Right cardiac atrium (tissue), 5 donors: ENCODE measurements at regions of chr4 and their contacts with region 1.

Region 1: DNA sequence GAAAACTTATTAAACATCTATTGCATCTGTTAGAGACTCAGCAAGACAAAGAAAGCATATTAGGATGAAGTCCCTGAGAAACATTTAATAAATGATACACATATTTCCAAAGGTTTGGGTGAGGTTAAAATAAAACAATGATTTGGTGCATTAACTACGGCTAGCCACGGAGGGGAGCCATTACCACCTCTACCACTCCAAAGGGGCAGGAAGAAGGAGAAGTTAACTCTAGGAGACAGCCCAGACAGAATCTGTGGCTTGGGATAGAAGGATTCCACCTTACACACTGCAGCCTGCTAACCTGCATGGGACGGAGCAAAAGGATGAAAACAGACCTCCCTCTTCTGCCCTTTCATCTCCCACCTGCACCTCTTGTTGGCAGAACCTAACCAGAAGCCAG is 189.1 kb upstream of the C1QTNF7 start:
- DNase-seq: no peak
- ATAC-seq: peak; percentile 67 to 79
- H3K4me3 ChIP-seq: no peak overlapping the region
- H3K27ac ChIP-seq: no peak overlapping the region
- H3K4me1 ChIP-seq: no peaks in the 10 kb centered on the region
- H3K27me3 ChIP-seq: no peaks in the 10 kb centered on the region

Region 2: DNA sequence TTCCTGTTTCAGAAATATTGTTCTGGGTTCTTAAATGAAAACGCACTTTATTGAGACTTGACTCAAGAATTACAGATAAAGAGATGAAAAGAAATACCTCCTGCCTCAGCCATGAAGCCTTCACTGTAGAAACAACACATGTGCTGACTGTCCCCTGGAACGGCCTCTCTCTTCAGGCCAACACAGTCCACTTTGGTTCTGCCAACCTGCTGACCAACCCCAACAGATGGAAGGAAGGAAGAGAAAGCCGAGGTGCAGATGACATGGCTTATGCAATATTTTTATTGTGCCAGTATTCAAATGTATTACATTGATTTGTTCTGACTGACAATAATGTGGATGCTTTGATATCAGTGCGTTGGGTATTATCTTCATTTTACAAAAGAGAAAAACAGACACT is 65.5 kb before region 1 on chr4:
- intact Hi-C with region 1: no loop called
- DNase-seq: no peak
- ATAC-seq: no peak
- H3K4me3 ChIP-seq: no peak overlapping the region
- H3K27ac ChIP-seq: no peak overlapping the region
- H3K4me1 ChIP-seq: no peaks in the 10 kb centered on the region
- H3K27me3 ChIP-seq: no peaks in the 10 kb centered on the region

Region 3: GRCh38 chr4:15396157-15396800 is 157.6 kb after region 1 on chr4:
- intact Hi-C with region 1: loop called in 3 of 4 experiments (anchors 5 to 10 kb)
- DNase-seq: peak in 1 of 3 donors; percentile 58
- ATAC-seq: peak; percentile 13 to 56
- H3K4me3 ChIP-seq: no peak overlapping the region
- H3K27ac ChIP-seq: no peak overlapping the region
- H3K4me1 ChIP-seq: peaks cover 3% of the 10 kb centered on the region
- H3K27me3 ChIP-seq: no peaks in the 10 kb centered on the region

Region 4: GRCh38 chr4:15451866-15452765 is 213.4 kb after region 1 on chr4:
- intact Hi-C with region 1: loop called (anchors 2 to 5 kb)
- DNase-seq: no peak
- ATAC-seq: peak; percentile 77 to 79
- H3K4me3 ChIP-seq: no peak overlapping the region
- H3K27ac ChIP-seq: no peak overlapping the region
- H3K4me1 ChIP-seq: peaks cover 4% of the 10 kb centered on the region
- H3K27me3 ChIP-seq: no peaks in the 10 kb centered on the region

Region 5: GRCh38 chr4:15457406-15458201 is 218.9 kb after region 1 on chr4:
- intact Hi-C with region 1: loop called (anchors 2 to 5 kb)
- DNase-seq: no peak
- ATAC-seq: peak; percentile 59 to 70
- H3K4me3 ChIP-seq: no peak overlapping the region
- H3K27ac ChIP-seq: no peak overlapping the region
- H3K4me1 ChIP-seq: no peaks in the 10 kb centered on the region
- H3K27me3 ChIP-seq: no peaks in the 10 kb centered on the region